Transverse colon (tissue), 4 donors: ENCODE measurements at regions of chr5 and their contacts with region 1.

Region 1: DNA sequence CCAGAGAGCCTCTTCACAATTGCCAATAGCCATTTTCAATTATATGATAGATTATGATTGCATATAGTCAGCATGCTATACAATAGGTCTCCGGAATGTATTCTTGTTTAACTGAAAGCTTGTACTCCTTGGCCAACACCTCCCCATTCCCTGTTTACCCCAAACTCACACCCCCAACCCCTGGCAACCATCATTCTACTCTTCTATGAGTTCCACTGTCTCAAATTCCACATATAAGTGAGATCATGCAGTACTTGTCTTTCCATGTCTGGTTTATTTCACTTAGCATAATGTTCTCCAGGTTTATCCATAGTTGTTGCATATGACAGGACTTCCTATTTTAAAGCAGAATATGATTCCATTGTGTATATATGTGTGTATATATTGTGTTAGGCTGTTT is 110.7 kb upstream of the STC2 start:
- DNase-seq: no peak
- H3K4me3 ChIP-seq: no peak overlapping the region
- H3K27ac ChIP-seq: no peak overlapping the region
- H3K4me1 ChIP-seq: no peaks in the 10 kb centered on the region
- H3K27me3 ChIP-seq: no peaks in the 10 kb centered on the region
- CTCF ChIP-seq: no peak
- EP300 ChIP-seq: no peak
- POLR2A ChIP-seq: no peak

Region 2: DNA sequence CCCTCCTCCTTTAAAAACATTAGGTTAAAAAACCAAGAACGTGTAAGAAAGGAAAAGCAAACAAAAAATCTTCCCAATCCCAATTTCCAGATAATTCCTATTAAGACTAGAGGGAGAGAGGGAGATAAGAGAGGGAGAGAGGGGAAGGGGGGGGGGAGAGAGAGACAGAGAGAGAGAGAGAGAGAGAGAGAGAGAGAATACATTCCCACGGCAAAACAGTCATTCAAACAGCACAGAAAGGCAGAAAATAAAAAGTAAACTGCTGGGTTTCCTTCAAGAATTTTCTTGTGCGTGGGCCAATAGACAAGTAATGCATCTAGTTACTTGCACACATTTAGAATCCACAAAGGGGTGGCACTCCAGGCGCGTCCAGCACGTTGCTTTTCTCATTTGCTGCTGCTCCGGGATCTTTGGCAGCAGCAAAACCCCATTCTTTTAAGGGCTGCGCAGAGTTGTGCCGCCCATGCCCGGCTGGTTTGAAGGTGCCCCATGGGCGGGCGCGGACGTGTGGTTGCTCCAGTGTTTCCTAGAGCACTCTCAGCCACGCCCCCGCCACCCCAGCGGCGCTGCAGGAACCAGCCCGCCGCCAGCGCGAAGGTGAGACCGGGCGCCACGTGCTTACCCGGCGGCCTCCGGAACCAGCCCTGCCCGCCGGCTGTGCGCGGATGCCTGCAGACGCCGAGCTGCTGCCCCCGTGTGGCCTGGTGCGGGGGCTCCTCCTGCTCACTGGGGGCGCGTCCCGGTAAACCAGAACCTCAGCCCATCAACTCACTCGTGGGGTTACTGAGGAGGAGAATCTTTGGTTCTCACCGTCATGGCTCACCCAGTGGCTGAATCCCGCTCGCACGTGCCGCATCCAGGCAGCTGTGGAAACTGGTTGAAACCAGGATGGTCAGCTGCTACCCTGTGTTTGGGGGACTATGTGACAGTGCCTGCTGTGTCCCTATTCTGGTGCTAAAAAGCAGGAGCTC is 155.3 kb before region 1 on chr5:
- in situ Hi-C with region 1: no loop called
- intact Hi-C with region 1: no loop called
- DNase-seq: peak; percentile 51
- H3K4me3 ChIP-seq: peak overlapping the region in 1 of 4 donors; percentile 34
- H3K27ac ChIP-seq: no peak overlapping the region
- H3K4me1 ChIP-seq: peaks cover 0 to 8% (median 5%) of the 10 kb centered on the region in 4 donors
- H3K27me3 ChIP-seq: peaks cover 72% of the 10 kb centered on the region
- CTCF ChIP-seq: peak; percentile 37 to 50 (median 45)
- EP300 ChIP-seq: no peak
- POLR2A ChIP-seq: no peak

Region 3: GRCh38 chr5:173391031-173391430 is 47.9 kb before region 1 on chr5:
- in situ Hi-C with region 1: no loop called
- intact Hi-C with region 1: loop called (anchors 2 kb)
- DNase-seq: no peak
- H3K4me3 ChIP-seq: no peak overlapping the region
- H3K27ac ChIP-seq: no peak overlapping the region
- H3K4me1 ChIP-seq: no peaks in the 10 kb centered on the region
- H3K27me3 ChIP-seq: no peaks in the 10 kb centered on the region
- CTCF ChIP-seq: no peak
- EP300 ChIP-seq: no peak
- POLR2A ChIP-seq: no peak